ENCODE measurements at regions of chr20 and their contacts with region 1.

Region 1: GRCh38 chr20:10504994-10505730 is 70.1 kb downstream of the SLX4IP start:
- DNase-seq: peak; percentile 63 to 88 (median 70)
- H3K4me3 ChIP-seq: peak overlapping the region; percentile 4 to 65 (median 7)
- H3K4me3 Mint-ChIP-seq: peak overlapping the region; percentile 64 to 87
- H3K27ac ChIP-seq: peak overlapping the region; percentile 87 to 90
- H3K27ac Mint-ChIP-seq: peak overlapping the region; percentile 89 to 98 (median 95)
- H3K4me1 ChIP-seq: peaks cover 79 to 81% of the 10 kb centered on the region in 2 donors
- H3K4me1 Mint-ChIP-seq: peaks cover 82% of the 10 kb centered on the region
- H3K27me3 ChIP-seq: no peaks in the 10 kb centered on the region
- H3K27me3 Mint-ChIP-seq: peaks cover 0 to 2% (median 0%) of the 10 kb centered on the region in 3 donors
- CTCF ChIP-seq: no peak

Region 2: DNA sequence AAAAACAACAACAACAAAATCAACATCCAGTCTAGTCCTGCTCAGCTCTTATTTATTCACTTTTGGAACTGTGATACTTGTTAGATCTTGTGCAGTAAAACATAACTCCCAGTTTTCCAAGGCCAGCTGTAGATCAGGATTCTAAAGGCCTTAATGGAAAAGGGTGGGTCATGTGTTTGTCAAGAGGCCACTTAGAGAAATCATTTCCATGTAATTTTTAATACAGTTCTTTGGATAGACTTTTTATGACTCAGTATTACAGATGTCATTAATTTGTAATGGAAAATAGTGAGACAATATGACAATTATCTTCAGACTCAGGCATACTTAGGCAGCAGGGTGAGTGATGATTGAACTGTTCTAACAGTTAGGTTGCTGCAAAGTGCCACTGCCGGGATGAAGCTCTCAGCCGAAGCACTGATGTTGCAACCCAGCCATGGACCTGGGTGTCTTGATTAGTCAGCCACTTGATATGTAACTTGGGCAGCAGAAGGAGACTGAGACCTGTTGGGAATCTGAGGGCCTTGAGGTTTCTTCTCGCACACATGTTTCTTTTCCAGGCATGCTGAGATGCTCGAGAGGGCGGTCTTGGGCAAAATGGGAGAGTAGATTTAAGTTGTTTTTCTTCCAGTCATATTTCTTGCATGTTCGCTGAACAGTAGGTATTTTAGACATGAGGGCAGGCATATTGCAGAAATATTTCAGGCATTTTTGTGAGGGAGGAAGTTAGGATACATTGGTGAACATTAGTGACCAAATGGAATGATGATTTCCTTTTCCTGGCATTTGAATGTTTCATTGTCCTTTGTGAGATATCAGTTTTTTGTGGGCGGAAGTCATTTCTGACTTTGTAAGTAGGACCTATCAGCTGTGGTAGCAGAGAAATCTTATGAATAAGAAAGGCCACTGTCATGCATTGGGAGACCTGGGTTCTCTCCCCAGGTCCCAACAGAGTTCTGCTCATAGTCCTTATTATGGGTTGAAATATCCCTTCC is 17.7 kb before region 1 on chr20:
- intact Hi-C with region 1: loop called in 1 of 2 experiments (anchors 2 kb)
- DNase-seq: peak; percentile 70 to 90 (median 82)
- H3K4me3 ChIP-seq: peak overlapping the region in 1 of 3 experiments; percentile 13
- H3K4me3 Mint-ChIP-seq: no peak overlapping the region
- H3K27ac ChIP-seq: peak overlapping the region; percentile 41 to 79
- H3K27ac Mint-ChIP-seq: peak overlapping the region; percentile 81 to 96 (median 92)
- H3K4me1 ChIP-seq: peaks cover 43 to 51% of the 10 kb centered on the region in 2 donors
- H3K4me1 Mint-ChIP-seq: peaks cover 52% of the 10 kb centered on the region
- H3K27me3 ChIP-seq: no peaks in the 10 kb centered on the region
- H3K27me3 Mint-ChIP-seq: no peaks in the 10 kb centered on the region
- CTCF ChIP-seq: no peak